Naive thymus-derived CD4-positive, alpha-beta T cell (primary cell): ENCODE measurements at regions of chr1 and their contacts with region 1.

Region 1: GRCh38 chr1:224329842-224330753 is at the start of gene NVL:
- DNase-seq: peak; percentile 71 to 84 (median 79)
- ATAC-seq: peak; percentile 91
- H3K4me3 ChIP-seq: peak within 1 kb of the TSS; percentile 96
- H3K4me3 Mint-ChIP-seq: peak within 1 kb of the TSS; percentile 91 to 100 (median 97)
- H3K27ac ChIP-seq: peak within 1 kb of the TSS; percentile 90
- H3K27ac Mint-ChIP-seq: peak within 1 kb of the TSS; percentile 97 to 100 (median 99)
- H3K4me1 ChIP-seq: peaks cover 3 to 6% of the 10 kb centered on the region in 2 donors
- H3K4me1 Mint-ChIP-seq: peaks cover 29 to 63% (median 47%) of the 10 kb centered on the region in 7 donors
- H3K27me3 ChIP-seq: no peaks in the 10 kb centered on the region
- H3K27me3 Mint-ChIP-seq: no peaks in the 10 kb centered on the region
- total RNA-seq, gene NVL: 23.9 to 48.6 (median 44.7) TPM

Region 2: GRCh38 chr1:223700942-223701637 is 629.0 kb before region 1 on chr1:
- CTCF ChIA-PET with region 1: no interaction called
- POLR2A ChIA-PET with region 1: no interaction called
- intact Hi-C with region 1: loop called (anchors 1 to 5 kb)
- DNase-seq: peak in 1 of 9 donors; percentile 41
- ATAC-seq: peak; percentile 32
- H3K4me3 ChIP-seq: no peak overlapping the region
- H3K4me3 Mint-ChIP-seq: no peak overlapping the region
- H3K27ac ChIP-seq: no peak overlapping the region
- H3K27ac Mint-ChIP-seq: no peak overlapping the region
- H3K4me1 ChIP-seq: no peaks in the 10 kb centered on the region
- H3K4me1 Mint-ChIP-seq: peaks cover 0 to 15% (median 6%) of the 10 kb centered on the region in 7 donors
- H3K27me3 ChIP-seq: no peaks in the 10 kb centered on the region
- H3K27me3 Mint-ChIP-seq: peaks cover 0 to 11% (median 0%) of the 10 kb centered on the region in 5 donors

Region 3: GRCh38 chr1:223811634-223812415 is 518.3 kb before region 1 on chr1:
- CTCF ChIA-PET with region 1: no interaction called
- POLR2A ChIA-PET with region 1: interaction called, 3 read pairs
- intact Hi-C with region 1: loop called (anchors 1 to 2 kb)
- DNase-seq: peak in 6 of 9 donors; percentile 24 to 58 (median 44)
- ATAC-seq: peak; percentile 72
- H3K4me3 ChIP-seq: no peak overlapping the region
- H3K4me3 Mint-ChIP-seq: peak overlapping the region in 2 of 10 donors; percentile 44 to 49
- H3K27ac ChIP-seq: no peak overlapping the region
- H3K27ac Mint-ChIP-seq: peak overlapping the region in 6 of 9 donors; percentile 19 to 63 (median 57)
- H3K4me1 ChIP-seq: peaks cover 0 to 22% of the 10 kb centered on the region in 2 donors
- H3K4me1 Mint-ChIP-seq: peaks cover 16 to 44% (median 39%) of the 10 kb centered on the region in 7 donors
- H3K27me3 ChIP-seq: no peaks in the 10 kb centered on the region
- H3K27me3 Mint-ChIP-seq: no peaks in the 10 kb centered on the region

Region 4: GRCh38 chr1:224168859-224169380 is 161.2 kb before region 1 on chr1:
- CTCF ChIA-PET with region 1: interaction called, 4 read pairs
- POLR2A ChIA-PET with region 1: interaction called, 3 read pairs
- intact Hi-C with region 1: loop called (anchors 1 kb)
- DNase-seq: peak in 7 of 9 donors; percentile 56 to 80 (median 76)
- ATAC-seq: peak; percentile 93
- H3K4me3 ChIP-seq: no peak overlapping the region
- H3K4me3 Mint-ChIP-seq: peak overlapping the region; percentile 59 to 80 (median 70)
- H3K27ac ChIP-seq: no peak overlapping the region
- H3K27ac Mint-ChIP-seq: peak overlapping the region; percentile 43 to 85 (median 77)
- H3K4me1 ChIP-seq: peaks cover 17 to 29% of the 10 kb centered on the region in 2 donors
- H3K4me1 Mint-ChIP-seq: peaks cover 33 to 38% (median 36%) of the 10 kb centered on the region in 7 donors
- H3K27me3 ChIP-seq: no peaks in the 10 kb centered on the region
- H3K27me3 Mint-ChIP-seq: peaks cover 0 to 11% (median 0%) of the 10 kb centered on the region in 5 donors

Region 5: GRCh38 chr1:224245188-224245587 is 84.9 kb before region 1 on chr1:
- CTCF ChIA-PET with region 1: interaction called, 3 read pairs
- POLR2A ChIA-PET with region 1: interaction called, 5 read pairs
- intact Hi-C with region 1: loop called (anchors 2 to 5 kb)
- DNase-seq: peak in 6 of 9 donors; percentile 17 to 62 (median 47)
- ATAC-seq: peak; percentile 85
- H3K4me3 ChIP-seq: no peak overlapping the region
- H3K4me3 Mint-ChIP-seq: peak overlapping the region; percentile 53 to 79 (median 62)
- H3K27ac ChIP-seq: peak overlapping the region; percentile 48
- H3K27ac Mint-ChIP-seq: peak overlapping the region; percentile 85 to 97 (median 94)
- H3K4me1 ChIP-seq: peaks cover 10 to 20% of the 10 kb centered on the region in 2 donors
- H3K4me1 Mint-ChIP-seq: peaks cover 0 to 30% (median 29%) of the 10 kb centered on the region in 7 donors
- H3K27me3 ChIP-seq: no peaks in the 10 kb centered on the region
- H3K27me3 Mint-ChIP-seq: no peaks in the 10 kb centered on the region

Region 6: GRCh38 chr1:224377676-224378006 is 47.5 kb after region 1 on chr1:
- CTCF ChIA-PET with region 1: interaction called, 9 read pairs
- POLR2A ChIA-PET with region 1: no interaction called
- intact Hi-C with region 1: loop called in 1 of 2 experiments (anchors 2 kb)
- DNase-seq: no peak
- ATAC-seq: peak; percentile 46
- H3K4me3 ChIP-seq: no peak overlapping the region
- H3K4me3 Mint-ChIP-seq: peak overlapping the region; percentile 34 to 82 (median 64)
- H3K27ac ChIP-seq: no peak overlapping the region
- H3K27ac Mint-ChIP-seq: peak overlapping the region; percentile 53 to 93 (median 81)
- H3K4me1 ChIP-seq: peaks cover 74 to 76% of the 10 kb centered on the region in 2 donors
- H3K4me1 Mint-ChIP-seq: peaks cover 74 to 97% (median 92%) of the 10 kb centered on the region in 7 donors
- H3K27me3 ChIP-seq: no peaks in the 10 kb centered on the region
- H3K27me3 Mint-ChIP-seq: no peaks in the 10 kb centered on the region

Region 7: DNA sequence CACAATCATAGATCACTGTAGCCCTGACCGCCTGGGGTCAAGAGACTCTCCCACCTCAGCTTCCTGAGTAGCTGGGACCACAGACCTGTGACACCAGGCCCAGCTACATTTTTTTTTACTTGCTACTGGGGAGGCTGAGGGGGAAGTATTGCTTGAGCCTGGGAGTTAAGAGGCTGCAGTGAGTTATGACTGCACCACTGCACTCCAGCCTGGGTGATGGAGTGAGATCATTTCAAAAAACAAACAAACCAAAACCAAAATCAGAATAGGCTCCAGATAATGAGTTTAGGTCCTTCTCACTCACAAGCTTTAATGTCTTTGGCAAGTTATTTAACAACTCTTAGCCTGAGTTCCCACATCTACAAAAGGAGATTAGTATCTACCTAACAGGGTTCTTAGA is 81.7 kb after region 1 on chr1:
- CTCF ChIA-PET with region 1: no interaction called
- POLR2A ChIA-PET with region 1: no interaction called
- intact Hi-C with region 1: no loop called
- DNase-seq: no peak
- ATAC-seq: peak; percentile 37
- H3K4me3 ChIP-seq: no peak overlapping the region
- H3K4me3 Mint-ChIP-seq: no peak overlapping the region
- H3K27ac ChIP-seq: no peak overlapping the region
- H3K27ac Mint-ChIP-seq: peak overlapping the region in 7 of 9 donors; percentile 15 to 72 (median 38)
- H3K4me1 ChIP-seq: no peaks in the 10 kb centered on the region
- H3K4me1 Mint-ChIP-seq: peaks cover 7 to 35% (median 15%) of the 10 kb centered on the region in 7 donors
- H3K27me3 ChIP-seq: no peaks in the 10 kb centered on the region
- H3K27me3 Mint-ChIP-seq: no peaks in the 10 kb centered on the region